ENCODE measurements at regions of chr13 and their contacts with region 1.

Region 1: DNA sequence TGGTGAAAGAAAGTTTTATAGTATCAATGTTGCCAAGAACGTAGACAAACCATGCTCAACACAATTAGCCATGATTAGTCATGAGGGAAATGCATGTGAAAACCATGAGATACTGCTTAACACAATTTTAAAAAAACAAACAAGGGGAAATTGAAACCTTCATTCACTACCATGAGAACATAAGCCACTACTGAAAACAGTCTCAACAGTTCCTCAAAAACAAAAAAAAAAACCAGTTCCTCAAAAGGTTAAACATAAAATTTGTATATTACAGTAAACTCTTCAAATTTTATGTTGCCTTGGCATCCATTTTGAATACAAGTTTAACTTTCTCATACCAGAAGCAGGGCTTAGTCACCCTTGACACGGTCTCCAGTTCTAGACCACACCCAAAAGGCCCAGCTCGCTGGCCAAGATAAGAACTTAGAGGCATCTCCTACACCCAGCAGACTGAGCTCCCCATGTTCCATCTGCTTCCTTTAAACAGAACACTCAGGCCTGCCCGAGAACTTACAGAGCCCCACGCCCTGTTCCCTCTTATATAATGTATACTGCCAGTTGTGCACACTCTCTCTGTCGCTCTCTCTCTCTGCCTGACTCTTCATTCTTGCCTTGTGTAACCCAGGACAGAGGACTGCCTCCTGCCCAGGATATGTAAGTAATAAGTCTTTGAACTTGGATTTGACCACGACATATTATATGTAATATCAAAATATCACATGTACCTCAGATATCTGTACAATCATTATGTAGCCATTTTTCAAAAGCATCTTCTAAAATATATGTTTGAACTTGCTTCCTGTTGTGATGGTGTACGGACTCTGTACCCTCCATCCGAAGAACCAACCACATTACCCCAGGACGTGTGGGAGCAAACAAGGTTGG is 67.4 kb downstream of the STK24 start:
- DNase-seq: peak in 3 of 5 donors; percentile 41 to 82 (median 74)
- ATAC-seq: peak; percentile 64 to 84 (median 75)
- H3K4me3 ChIP-seq: no peak overlapping the region
- H3K27ac ChIP-seq: peak overlapping the region; percentile 4 to 81 (median 42)
- H3K4me1 ChIP-seq: peaks cover 20 to 87% (median 67%) of the 10 kb centered on the region in 12 donors
- H3K27me3 ChIP-seq: no peaks in the 10 kb centered on the region
- CTCF ChIP-seq: no peak
- POLR2A ChIP-seq: no peak

Region 2: DNA sequence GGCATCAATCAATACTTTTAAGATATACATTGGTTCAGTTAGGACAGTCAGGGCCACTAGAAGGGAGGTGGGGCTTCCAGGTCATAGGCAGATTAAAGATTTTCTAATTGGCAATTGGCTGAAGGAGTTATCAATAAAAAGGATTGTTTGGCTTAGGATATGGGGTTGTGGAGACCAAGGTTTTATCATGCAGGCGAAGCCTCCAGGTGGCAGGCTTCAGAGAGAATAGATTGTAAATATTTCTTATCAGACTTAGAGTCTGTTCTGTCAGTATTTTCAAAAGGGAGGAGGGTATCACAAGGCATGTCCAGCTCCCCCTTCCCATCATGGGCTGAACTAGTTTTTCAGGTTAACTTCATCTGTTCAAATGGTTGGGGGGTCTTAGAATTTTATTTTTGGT is 444.0 kb before region 1 on chr13:
- intact Hi-C with region 1: no loop called
- DNase-seq: no peak
- ATAC-seq: no peak
- H3K4me3 ChIP-seq: no peak overlapping the region
- H3K27ac ChIP-seq: no peak overlapping the region
- H3K4me1 ChIP-seq: no peaks in the 10 kb centered on the region
- H3K27me3 ChIP-seq: peaks cover 0 to 3% (median 0%) of the 10 kb centered on the region in 9 donors
- CTCF ChIP-seq: no peak
- POLR2A ChIP-seq: no peak

Region 3: GRCh38 chr13:98556968-98557631 is 47.6 kb after region 1 on chr13:
- intact Hi-C with region 1: no loop called
- DNase-seq: no peak
- ATAC-seq: peak in 3 of 4 donors; percentile 34 to 51 (median 42)
- H3K4me3 ChIP-seq: no peak overlapping the region
- H3K27ac ChIP-seq: no peak overlapping the region
- H3K4me1 ChIP-seq: peaks cover 0 to 80% (median 58%) of the 10 kb centered on the region in 12 donors
- H3K27me3 ChIP-seq: no peaks in the 10 kb centered on the region
- CTCF ChIP-seq: no peak
- POLR2A ChIP-seq: no peak

Region 4: GRCh38 chr13:98570929-98571372 is 61.4 kb after region 1 on chr13:
- intact Hi-C with region 1: loop called in 7 of 10 experiments (anchors 2 to 10 kb)
- DNase-seq: peak in 1 of 5 donors; percentile 31
- ATAC-seq: peak; percentile 13 to 47 (median 29)
- H3K4me3 ChIP-seq: peak overlapping the region in 10 of 12 donors; percentile 3 to 46 (median 28)
- H3K27ac ChIP-seq: peak overlapping the region in 11 of 12 donors; percentile 17 to 78 (median 47)
- H3K4me1 ChIP-seq: peaks cover 5 to 93% (median 68%) of the 10 kb centered on the region in 12 donors
- H3K27me3 ChIP-seq: no peaks in the 10 kb centered on the region
- CTCF ChIP-seq: no peak
- POLR2A ChIP-seq: peak in 1 of 2 donors; percentile 9